Left ventricle myocardium superior (tissue), 1 donor: ENCODE measurements at regions of chr9 and their contacts with region 1.

Region 1: DNA sequence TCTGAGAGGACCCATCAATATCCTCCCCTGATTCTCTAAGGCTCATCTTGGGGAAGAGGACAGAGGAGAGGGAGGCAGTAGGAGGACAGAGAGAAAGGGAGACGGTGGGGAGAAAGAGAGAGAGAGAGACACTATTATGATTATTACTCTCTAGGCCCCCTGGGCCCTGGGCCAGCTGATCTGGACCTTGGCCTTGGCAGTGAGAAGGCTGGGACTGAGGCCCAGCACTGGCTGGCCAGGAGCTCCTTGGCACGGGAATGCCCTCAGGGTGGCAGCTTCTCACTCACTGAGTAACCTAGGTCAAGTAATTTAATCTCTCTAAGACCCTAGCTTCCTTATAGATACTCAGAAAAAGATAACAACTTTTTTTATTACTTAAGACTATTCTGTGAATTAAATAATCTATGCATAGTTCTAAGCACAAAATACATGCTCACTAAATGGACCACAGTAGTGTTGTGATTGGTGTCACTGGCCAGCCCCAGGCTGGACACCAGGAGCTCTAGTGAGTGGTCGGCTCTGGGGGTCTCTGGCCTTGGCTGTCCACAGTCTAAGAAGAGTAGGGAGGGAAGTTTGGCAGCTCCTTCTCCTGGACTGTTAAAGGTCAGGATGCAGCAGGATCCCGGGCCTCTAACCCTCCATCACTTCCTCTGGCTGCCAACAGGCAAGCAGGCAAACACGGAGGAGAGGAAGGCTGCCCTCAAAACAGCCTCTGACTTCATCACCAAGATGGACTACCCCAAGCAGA is 50.0 kb downstream of the GSN start:
- DNase-seq: peak; percentile 84
- ATAC-seq: peak; percentile 56

Region 2: DNA sequence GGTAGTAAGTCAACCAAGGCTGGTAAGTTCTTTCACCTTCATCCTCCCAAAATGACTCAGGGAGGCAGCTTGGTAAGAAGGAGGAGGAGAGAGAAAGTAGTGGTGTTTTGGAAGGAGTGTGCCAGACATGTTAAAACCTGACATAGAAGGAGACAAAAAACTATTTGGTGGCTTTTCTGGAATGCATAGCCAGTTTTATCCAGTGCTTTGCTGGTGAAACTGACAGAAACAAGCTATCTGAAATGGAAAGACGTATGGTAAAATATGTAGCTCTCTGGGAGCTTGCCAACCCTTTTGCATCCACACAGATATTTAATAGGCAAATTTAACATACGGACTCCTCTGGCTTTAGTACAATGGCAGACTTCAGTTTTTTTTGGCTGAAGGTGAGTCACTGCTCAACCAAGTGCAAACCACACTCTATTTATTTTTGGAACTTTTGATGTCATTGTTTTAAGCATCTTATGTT is 161.6 kb before region 1 on chr9:
- intact Hi-C with region 1: no loop called
- DNase-seq: no peak
- ATAC-seq: no peak

Region 3: GRCh38 chr9:121278535-121279261 is 39.2 kb before region 1 on chr9:
- intact Hi-C with region 1: no loop called
- DNase-seq: peak; percentile 68
- ATAC-seq: peak; percentile 59

Region 4: GRCh38 chr9:121399883-121400607 is 82.1 kb after region 1 on chr9:
- intact Hi-C with region 1: loop called (anchors 5 kb)
- DNase-seq: no peak
- ATAC-seq: peak; percentile 36